ENCODE measurements at regions of chr13 and their contacts with region 1.

Region 1: GRCh38 chr13:77565635-77566034 is 30.1 kb downstream of the SCEL start:
- DNase-seq: no peak
- H3K4me3 Mint-ChIP-seq: no peak overlapping the region
- H3K27ac Mint-ChIP-seq: no peak overlapping the region
- H3K4me1 Mint-ChIP-seq: no peaks in the 10 kb centered on the region
- H3K27me3 Mint-ChIP-seq: peaks cover 14% of the 10 kb centered on the region

Region 2: GRCh38 chr13:77492982-77493381 is 72.7 kb before region 1 on chr13:
- CTCF ChIA-PET with region 1: interaction called, 19 read pairs
- POLR2A ChIA-PET with region 1: no interaction called
- intact Hi-C with region 1: loop called (anchors 1 kb)
- DNase-seq: no peak
- H3K4me3 Mint-ChIP-seq: no peak overlapping the region
- H3K27ac Mint-ChIP-seq: no peak overlapping the region
- H3K4me1 Mint-ChIP-seq: no peaks in the 10 kb centered on the region
- H3K27me3 Mint-ChIP-seq: peaks cover 2% of the 10 kb centered on the region

Region 3: GRCh38 chr13:77678691-77679267 is 113.1 kb after region 1 on chr13:
- CTCF ChIA-PET with region 1: no interaction called
- POLR2A ChIA-PET with region 1: no interaction called
- intact Hi-C with region 1: no loop called
- DNase-seq: no peak
- H3K4me3 Mint-ChIP-seq: no peak overlapping the region
- H3K27ac Mint-ChIP-seq: no peak overlapping the region
- H3K4me1 Mint-ChIP-seq: no peaks in the 10 kb centered on the region
- H3K27me3 Mint-ChIP-seq: peaks cover 28% of the 10 kb centered on the region

Region 4: GRCh38 chr13:77810430-77810829 is 244.8 kb after region 1 on chr13:
- CTCF ChIA-PET with region 1: no interaction called
- POLR2A ChIA-PET with region 1: no interaction called
- intact Hi-C with region 1: no loop called
- DNase-seq: no peak
- H3K4me3 Mint-ChIP-seq: no peak overlapping the region
- H3K27ac Mint-ChIP-seq: no peak overlapping the region
- H3K4me1 Mint-ChIP-seq: no peaks in the 10 kb centered on the region
- H3K27me3 Mint-ChIP-seq: peaks cover 5% of the 10 kb centered on the region

Measured in activated CD4-positive, alpha-beta memory T cell treated with anti-CD3 and anti-CD28 coated beads for 36 hours (primary cell).